Esophagus muscularis mucosa (tissue), 4 donors: ENCODE measurements at regions of chr17 and their contacts with region 1.

Region 1: DNA sequence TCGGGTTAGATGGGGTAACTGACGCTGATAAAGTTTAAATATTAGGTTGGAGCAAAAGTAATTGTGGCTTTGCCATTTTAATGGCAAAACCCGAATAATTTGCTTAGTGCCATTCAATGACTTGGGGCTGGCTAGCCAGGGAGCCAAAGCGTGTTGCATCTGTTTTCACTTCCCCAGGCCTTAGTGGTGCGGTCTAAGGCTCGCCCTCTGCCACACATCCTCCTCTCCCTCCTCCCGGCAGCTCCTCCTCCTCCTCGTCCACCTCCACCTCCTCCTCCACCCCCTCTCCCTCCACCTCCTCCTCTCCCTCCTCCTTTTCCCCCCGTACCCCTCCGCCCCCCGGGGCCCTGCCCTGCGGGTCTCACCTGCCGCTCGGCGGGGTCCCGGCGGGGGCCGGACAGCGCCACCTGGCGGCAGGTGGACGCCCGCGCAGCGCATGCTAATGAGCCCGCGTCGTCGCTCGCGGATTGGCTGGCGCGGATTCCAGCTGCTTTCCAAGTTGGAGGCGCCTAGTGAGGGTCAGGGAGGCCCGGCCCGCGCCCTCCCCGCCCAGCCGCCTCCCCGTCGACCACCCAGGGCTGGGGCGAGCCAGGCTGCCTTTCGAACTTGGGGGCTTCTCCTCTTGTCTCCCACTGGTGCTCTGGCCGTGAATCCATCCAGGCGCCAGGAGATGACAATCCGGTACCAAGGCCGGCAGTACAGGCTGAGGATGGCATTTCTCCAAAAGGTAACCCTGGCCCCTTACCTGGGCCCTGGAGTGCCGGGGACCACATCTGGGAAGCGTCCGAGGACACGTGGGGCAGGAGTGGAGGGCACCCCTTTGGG is 36.6 kb upstream of the RGS9 start:
- DNase-seq: peak; percentile 93
- H3K4me3 ChIP-seq: peak overlapping the region; percentile 59 to 68 (median 65)
- H3K27ac ChIP-seq: peak overlapping the region; percentile 81 to 84 (median 82)
- H3K4me1 ChIP-seq: peaks cover 13 to 42% (median 38%) of the 10 kb centered on the region in 4 donors
- H3K27me3 ChIP-seq: no peaks in the 10 kb centered on the region
- CTCF ChIP-seq: peak in 2 of 3 experiments; percentile 96
- EP300 ChIP-seq: no peak
- POLR2A ChIP-seq: no peak

Region 2: DNA sequence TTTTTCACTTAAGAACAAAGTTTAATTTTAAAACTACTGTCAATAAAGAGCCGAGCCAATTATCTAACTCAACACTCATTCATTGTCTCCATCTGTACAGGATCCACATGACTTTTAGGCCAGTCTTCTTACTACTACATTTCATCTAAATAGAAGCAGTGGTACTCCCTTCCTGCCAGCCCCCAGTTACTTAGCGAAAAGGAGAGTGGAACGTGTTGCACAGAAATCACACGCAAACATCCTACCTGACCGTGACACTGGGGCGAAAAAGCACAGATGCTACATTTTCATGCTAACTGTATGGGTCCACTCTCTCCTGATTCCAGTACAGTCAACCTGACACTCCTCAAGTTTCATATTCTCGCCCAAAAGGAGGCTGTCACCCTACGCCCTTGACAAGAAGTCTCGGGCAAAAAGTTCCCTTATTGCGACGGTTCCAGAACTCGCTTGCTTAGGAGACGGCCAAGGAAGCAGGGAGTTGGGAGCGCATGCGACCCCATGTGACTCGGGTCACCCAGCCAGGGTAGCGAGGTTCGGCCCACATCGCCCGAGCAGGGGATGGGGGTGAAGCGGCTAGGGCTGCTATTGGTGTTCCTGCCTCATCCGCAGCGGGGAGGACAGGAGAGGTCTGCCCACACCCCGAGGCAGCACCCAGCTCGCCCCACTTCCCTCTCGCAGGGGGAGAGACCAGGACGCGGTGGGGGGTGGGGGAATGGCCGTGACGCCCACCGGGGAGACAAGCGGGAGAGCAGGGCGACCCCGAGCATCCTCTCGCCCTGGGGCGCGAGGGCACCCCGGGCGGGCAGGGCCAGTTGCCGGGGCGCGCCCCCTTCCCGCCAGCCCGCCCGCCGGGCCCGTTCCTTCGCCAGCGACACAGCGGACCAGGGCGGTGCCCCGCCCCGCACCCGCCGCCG is 44.9 kb before region 1 on chr17:
- intact Hi-C with region 1: loop called (anchors 2 kb)
- DNase-seq: no peak
- H3K4me3 ChIP-seq: peak overlapping the region; percentile 91 to 95 (median 93)
- H3K27ac ChIP-seq: peak overlapping the region; percentile 97 to 100 (median 99)
- H3K4me1 ChIP-seq: peaks cover 32 to 66% (median 59%) of the 10 kb centered on the region in 4 donors
- H3K27me3 ChIP-seq: no peaks in the 10 kb centered on the region
- CTCF ChIP-seq: no peak
- EP300 ChIP-seq: no peak
- POLR2A ChIP-seq: peak; percentile 55